Posterior cingulate gyrus (tissue), 11 donors: ENCODE measurements at regions of chr9 and their contacts with region 1.

Region 1: GRCh38 chr9:104093647-104094533 is at the start of gene SMC2:
- DNase-seq: peak; percentile 88 to 99 (median 94)

Region 2: DNA sequence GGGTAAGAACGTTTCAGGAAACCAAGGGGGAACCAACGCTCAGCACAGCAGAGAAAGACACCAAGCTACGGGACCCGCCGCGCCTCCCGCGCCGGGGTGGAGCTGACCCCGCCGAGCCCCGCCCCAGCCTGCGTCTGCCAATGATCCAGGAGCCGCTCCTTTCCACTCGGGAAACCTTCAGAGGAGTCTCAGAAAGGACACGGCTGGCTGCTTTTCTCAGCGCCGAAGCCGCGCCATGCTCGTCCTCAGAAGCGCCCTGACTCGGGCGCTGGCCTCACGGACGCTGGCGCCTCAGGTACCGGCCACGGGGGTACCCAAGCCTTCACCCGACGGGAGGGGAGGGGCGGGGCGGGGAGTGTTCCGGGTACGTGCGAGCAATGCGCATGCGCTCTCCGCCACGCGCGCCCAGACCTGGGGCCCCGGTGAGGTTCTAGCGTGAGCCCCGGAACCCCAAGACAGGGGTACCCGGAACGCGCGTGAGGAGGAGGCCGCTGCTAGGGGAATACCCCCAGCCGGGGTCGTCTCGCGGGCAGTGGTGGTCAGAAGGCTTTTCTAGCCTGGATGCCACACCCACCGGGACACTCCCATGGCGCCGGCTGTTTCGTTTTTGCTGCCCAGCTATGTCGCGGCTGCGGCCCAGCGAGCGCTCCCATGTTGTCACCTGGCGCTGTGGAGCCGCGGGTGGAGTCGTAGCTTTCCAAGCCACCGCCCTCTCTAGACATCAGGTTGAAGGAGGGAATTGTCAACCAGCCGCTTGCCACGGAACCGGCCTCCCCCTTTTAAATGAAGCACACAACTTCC is 653.9 kb after region 1 on chr9 and contains the start of gene NIPSNAP3A:
- intact Hi-C with region 1: loop called (anchors 5 kb)
- DNase-seq: peak; percentile 73 to 98 (median 88)